Caco-2 (cell line): ENCODE measurements at regions of chr2 and their contacts with region 1.

Region 1: DNA sequence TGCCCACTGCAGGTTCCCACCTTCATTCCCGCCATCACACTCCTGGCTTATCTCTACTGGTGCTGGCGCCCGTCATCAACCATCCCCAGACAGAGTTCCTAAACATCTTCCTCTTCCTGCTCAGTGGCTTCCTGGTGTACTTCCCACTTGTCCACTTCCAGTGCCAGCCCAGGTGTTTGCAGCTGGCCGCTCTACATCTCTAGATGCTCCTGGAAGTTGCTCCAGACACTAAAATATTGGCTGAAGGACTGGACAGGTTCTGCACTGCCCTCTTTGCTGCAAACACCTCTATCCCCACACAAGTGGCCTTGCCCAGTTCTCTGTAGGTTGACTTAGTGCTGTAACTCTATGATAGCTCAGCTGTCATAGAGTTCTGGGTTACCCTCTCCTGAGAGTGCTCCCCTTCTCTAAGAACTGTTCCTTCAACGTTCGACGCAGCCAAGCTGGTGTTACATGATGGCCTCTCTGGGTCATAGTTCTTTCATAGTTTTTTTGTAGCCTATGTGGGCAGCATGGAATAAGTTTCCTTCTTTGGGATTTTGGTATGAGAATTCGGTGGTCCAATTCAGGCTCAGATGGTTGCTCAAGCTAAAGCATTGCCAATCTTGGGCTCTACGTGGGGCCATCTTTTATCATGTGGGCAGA is 45.8 kb upstream of the PUM2 start:
- DNase-seq: no peak
- H3K4me3 ChIP-seq: no peak overlapping the region
- H3K4me3 Mint-ChIP-seq: no peak overlapping the region
- H3K27ac Mint-ChIP-seq: no peak overlapping the region
- H3K4me1 ChIP-seq: no peaks in the 10 kb centered on the region
- H3K4me1 Mint-ChIP-seq: no peaks in the 10 kb centered on the region
- H3K27me3 ChIP-seq: no peaks in the 10 kb centered on the region
- H3K27me3 Mint-ChIP-seq: no peaks in the 10 kb centered on the region
- CTCF ChIP-seq: no peak

Region 2: GRCh38 chr2:20212459-20212870 is 184.0 kb before region 1 on chr2:
- CTCF ChIA-PET with region 1: no interaction called
- POLR2A ChIA-PET with region 1: no interaction called
- intact Hi-C with region 1: no loop called
- DNase-seq: no peak
- H3K4me3 ChIP-seq: no peak overlapping the region
- H3K4me3 Mint-ChIP-seq: no peak overlapping the region
- H3K27ac Mint-ChIP-seq: no peak overlapping the region
- H3K4me1 ChIP-seq: peaks cover 41% of the 10 kb centered on the region
- H3K4me1 Mint-ChIP-seq: peaks cover 22% of the 10 kb centered on the region
- H3K27me3 ChIP-seq: no peaks in the 10 kb centered on the region
- H3K27me3 Mint-ChIP-seq: no peaks in the 10 kb centered on the region
- CTCF ChIP-seq: no peak

Region 3: GRCh38 chr2:20370191-20370590 is 26.3 kb before region 1 on chr2:
- CTCF ChIA-PET with region 1: no interaction called
- POLR2A ChIA-PET with region 1: no interaction called
- intact Hi-C with region 1: no loop called
- DNase-seq: no peak
- H3K4me3 ChIP-seq: no peak overlapping the region
- H3K4me3 Mint-ChIP-seq: no peak overlapping the region
- H3K27ac Mint-ChIP-seq: no peak overlapping the region
- H3K4me1 ChIP-seq: no peaks in the 10 kb centered on the region
- H3K4me1 Mint-ChIP-seq: no peaks in the 10 kb centered on the region
- H3K27me3 ChIP-seq: no peaks in the 10 kb centered on the region
- H3K27me3 Mint-ChIP-seq: no peaks in the 10 kb centered on the region
- CTCF ChIP-seq: no peak

Region 4: GRCh38 chr2:20411361-20411894 is 14.9 kb after region 1 on chr2:
- CTCF ChIA-PET with region 1: interaction called, 16 read pairs
- POLR2A ChIA-PET with region 1: no interaction called
- intact Hi-C with region 1: no loop called
- DNase-seq: peak; percentile 81 to 83
- H3K4me3 ChIP-seq: no peak overlapping the region
- H3K4me3 Mint-ChIP-seq: no peak overlapping the region
- H3K27ac Mint-ChIP-seq: no peak overlapping the region
- H3K4me1 ChIP-seq: no peaks in the 10 kb centered on the region
- H3K4me1 Mint-ChIP-seq: peaks cover 6% of the 10 kb centered on the region
- H3K27me3 ChIP-seq: no peaks in the 10 kb centered on the region
- H3K27me3 Mint-ChIP-seq: no peaks in the 10 kb centered on the region
- CTCF ChIP-seq: peak; percentile 79 to 83

Region 5: GRCh38 chr2:20650880-20651730 is 254.6 kb after region 1 on chr2 and contains the start of gene HS1BP3:
- CTCF ChIA-PET with region 1: interaction called, 5 read pairs
- POLR2A ChIA-PET with region 1: no interaction called
- intact Hi-C with region 1: loop called (anchors 1 kb)
- DNase-seq: peak; percentile 80 to 96
- H3K4me3 ChIP-seq: peak within 1 kb of the TSS; percentile 92
- H3K4me3 Mint-ChIP-seq: peak within 1 kb of the TSS; percentile 81
- H3K27ac Mint-ChIP-seq: peak within 1 kb of the TSS; percentile 81
- H3K4me1 ChIP-seq: peaks cover 13% of the 10 kb centered on the region
- H3K4me1 Mint-ChIP-seq: peaks cover 7% of the 10 kb centered on the region
- H3K27me3 ChIP-seq: no peaks in the 10 kb centered on the region
- H3K27me3 Mint-ChIP-seq: no peaks in the 10 kb centered on the region
- CTCF ChIP-seq: peak; percentile 55 to 95
- total RNA-seq, gene HS1BP3: 26.5 and 31.1 TPM in 2 replicates